OCI-LY7 (cell line): ENCODE measurements at regions of chr15 and their contacts with region 1.

Region 1: GRCh38 chr15:66774001-66774814 is 72.2 kb downstream of the SMAD6 start:
- DNase-seq: peak; percentile 71
- H3K4me3 ChIP-seq: no peak overlapping the region
- H3K27ac ChIP-seq: no peak overlapping the region
- H3K4me1 ChIP-seq: no peaks in the 10 kb centered on the region
- CTCF ChIP-seq: peak; percentile 88

Region 2: GRCh38 chr15:66603301-66604179 is 170.7 kb before region 1 on chr15:
- CTCF ChIA-PET with region 1: interaction called, 3 read pairs
- POLR2A ChIA-PET with region 1: interaction called, 3 read pairs
- intact Hi-C with region 1: loop called (anchors 1 kb)
- DNase-seq: peak; percentile 83
- H3K4me3 ChIP-seq: no peak overlapping the region
- H3K27ac ChIP-seq: no peak overlapping the region
- H3K4me1 ChIP-seq: no peaks in the 10 kb centered on the region
- CTCF ChIP-seq: peak; percentile 95

Region 3: DNA sequence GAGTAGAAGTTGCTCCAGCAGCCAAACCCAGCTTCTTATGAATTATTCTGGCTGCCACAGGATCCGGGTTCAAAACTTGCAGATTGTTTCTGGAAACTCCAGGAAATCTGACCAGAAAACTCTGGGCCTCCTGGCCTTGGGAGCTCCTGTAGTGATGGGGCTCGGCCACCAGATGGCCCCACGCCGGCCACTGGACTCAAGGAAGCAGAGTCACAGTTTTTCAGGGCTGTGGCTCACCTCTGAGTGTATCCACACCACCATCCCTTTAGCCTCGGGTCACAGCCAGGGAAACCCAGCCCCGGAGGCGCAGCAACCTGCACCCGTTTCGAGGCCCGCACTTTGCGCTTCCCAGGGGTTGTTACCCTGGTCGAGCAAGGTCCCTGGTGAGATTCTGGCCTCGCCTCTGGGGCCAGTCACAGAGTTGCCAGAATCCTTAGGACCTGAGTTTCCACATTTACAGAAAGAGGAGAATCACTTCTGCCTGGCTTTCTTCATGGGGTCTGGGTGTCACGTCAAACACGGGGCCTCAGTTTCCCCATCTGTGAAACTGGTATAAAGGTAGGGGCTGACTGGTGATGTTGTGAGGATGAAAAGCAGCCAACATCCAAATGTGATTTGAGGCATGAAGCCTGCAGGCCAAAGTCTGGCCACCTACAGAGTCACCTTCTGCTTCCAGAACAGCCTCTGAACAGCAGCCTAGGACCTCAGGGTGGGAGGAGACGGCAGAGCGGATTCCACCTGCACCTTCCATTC is 154.9 kb before region 1 on chr15:
- CTCF ChIA-PET with region 1: no interaction called
- POLR2A ChIA-PET with region 1: no interaction called
- intact Hi-C with region 1: loop called (anchors 1 kb)
- DNase-seq: peak; percentile 74
- H3K4me3 ChIP-seq: no peak overlapping the region
- H3K27ac ChIP-seq: no peak overlapping the region
- H3K4me1 ChIP-seq: no peaks in the 10 kb centered on the region
- CTCF ChIP-seq: peak; percentile 90

Region 4: DNA sequence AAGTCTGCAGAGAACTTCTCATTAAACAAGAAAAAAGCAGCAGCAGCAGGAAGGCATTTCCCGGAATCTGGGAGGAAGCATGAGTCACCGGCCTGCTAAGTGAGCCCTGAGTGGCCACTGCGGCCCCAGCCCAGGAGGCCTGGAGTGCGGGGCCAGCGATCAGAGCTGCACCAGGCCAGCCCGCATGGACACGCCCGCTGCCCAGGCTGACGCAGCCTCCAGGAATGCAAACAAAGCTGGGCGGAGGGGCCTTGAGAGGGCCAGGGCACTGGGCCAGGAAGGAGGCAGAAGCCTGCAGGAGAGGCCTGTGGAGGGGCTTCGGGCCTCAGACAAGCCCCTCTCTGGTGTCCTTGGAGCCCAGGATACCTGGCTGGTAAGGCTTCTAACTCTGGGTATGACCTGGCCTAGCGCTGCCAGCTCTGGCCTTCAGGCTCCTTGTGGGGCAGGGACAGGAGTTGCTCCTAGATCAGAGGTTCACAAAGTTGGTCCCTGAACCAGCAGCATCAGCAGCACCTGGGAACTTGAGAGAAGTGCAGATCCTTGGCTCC is 29.0 kb after region 1 on chr15:
- CTCF ChIA-PET with region 1: no interaction called
- POLR2A ChIA-PET with region 1: no interaction called
- intact Hi-C with region 1: no loop called
- DNase-seq: no peak
- H3K4me3 ChIP-seq: no peak overlapping the region
- H3K27ac ChIP-seq: no peak overlapping the region
- H3K4me1 ChIP-seq: no peaks in the 10 kb centered on the region
- CTCF ChIP-seq: no peak